ENCODE measurements at regions of chr11 and their contacts with region 1.

Region 1: DNA sequence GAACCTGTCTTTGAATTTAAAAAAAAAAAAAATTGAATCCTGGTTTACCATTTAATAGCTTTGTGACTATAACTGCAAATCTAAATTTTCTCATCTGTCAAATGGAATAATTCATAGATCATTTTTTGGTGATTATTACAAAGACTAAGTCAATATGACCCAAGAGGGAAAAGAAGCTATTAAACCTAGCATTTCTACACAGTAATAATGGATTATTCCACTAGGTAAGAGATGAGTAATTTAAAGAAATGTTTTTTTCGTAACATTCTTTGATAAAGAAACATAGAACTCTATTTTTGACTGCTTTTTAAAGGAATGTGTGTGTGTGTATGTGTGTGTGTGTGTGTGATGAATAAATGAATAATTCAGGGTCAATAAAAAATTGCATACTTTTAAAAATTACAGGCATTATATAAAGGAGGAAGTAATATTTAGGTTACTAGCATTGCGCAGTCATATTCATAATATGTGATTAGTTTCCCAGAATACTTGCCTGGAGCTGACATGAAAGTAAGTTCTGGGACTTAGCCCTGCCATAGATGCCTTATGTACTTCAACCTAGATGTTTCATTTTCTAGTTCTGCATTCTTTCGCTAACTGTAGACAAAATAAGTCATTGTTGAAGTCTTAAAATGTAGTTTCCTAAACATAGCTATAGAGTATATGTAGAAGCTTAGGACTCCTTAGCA is 72.9 kb downstream of the TMEM135 start:
- DNase-seq: no peak
- H3K4me3 Mint-ChIP-seq: no peak overlapping the region
- H3K27ac Mint-ChIP-seq: no peak overlapping the region
- H3K4me1 Mint-ChIP-seq: peaks cover 2% of the 10 kb centered on the region
- H3K27me3 Mint-ChIP-seq: no peaks in the 10 kb centered on the region

Region 2: GRCh38 chr11:87097582-87097981 is 13.0 kb before region 1 on chr11:
- CTCF ChIA-PET with region 1: interaction called, 10 read pairs
- POLR2A ChIA-PET with region 1: no interaction called
- DNase-seq: peak; percentile 35
- H3K4me3 Mint-ChIP-seq: no peak overlapping the region
- H3K27ac Mint-ChIP-seq: peak overlapping the region; percentile 3
- H3K4me1 Mint-ChIP-seq: peaks cover 8% of the 10 kb centered on the region
- H3K27me3 Mint-ChIP-seq: no peaks in the 10 kb centered on the region

Region 3: DNA sequence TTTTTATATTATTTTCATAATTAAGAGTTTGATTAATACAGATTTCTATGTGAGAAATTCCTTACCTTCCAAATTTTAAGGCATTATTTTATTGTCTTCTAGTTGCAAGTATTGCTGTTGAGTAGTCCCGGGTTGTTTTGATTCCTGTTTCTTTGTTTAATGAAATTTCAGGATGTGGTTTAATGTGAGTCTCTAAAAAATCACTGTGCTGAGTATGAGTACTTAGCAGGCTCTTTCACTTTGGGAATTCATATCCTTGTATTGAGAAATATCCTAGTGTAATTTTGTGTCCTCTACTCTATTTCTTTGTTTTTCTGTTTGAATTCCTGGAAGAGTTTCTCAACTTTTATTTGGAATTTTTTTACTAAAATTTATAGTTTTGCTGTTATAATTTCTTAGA is 40.3 kb after region 1 on chr11:
- CTCF ChIA-PET with region 1: no interaction called
- POLR2A ChIA-PET with region 1: no interaction called
- DNase-seq: no peak
- H3K4me3 Mint-ChIP-seq: no peak overlapping the region
- H3K27ac Mint-ChIP-seq: no peak overlapping the region
- H3K4me1 Mint-ChIP-seq: no peaks in the 10 kb centered on the region
- H3K27me3 Mint-ChIP-seq: no peaks in the 10 kb centered on the region